ENCODE measurements at regions of chr9 and their contacts with region 1.

Region 1: DNA sequence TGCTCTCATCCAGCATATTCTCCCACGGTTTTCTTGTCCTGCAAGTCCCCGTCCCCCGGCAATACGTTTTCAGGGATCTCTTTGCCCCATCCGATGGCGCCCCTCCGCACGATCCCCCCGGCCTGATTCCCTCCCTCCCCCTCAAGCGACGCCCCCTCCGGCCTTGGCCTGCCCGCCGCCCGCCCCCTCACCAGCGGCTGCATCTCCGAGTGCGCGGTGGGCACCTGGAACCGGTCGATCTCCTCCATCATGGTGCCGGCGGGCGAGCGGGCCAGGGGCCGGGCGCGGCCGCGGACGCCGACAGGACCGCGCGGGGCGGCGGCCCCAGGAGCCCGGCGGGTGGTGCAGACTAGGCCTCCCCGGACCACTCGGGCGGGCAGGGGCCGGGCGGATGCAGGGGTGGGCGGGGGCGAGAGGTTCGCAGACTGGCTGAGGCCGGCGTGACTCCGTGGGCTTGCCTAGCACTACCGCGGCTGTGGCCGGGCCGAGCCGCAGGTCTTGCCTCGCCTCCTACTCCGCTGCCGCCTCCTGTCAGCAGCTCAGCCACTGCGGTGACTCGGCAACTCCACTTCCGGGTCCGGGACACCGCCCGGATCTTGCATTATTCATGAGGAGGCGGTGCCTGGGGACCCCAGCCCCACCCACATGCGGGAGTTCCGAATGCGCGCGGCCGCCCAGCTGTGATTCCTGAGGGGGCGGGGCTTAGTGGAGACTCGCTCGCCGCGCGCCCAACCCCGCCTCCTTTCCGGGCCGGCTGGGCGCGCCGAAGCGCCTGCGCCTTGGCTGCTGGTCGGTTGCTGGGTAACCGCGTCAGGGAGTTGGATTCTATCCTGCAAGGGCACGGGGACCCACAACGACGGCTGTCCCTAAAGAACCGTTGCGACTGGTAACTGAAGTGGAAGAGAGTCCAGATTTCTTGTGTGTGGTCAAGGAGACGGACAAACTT is at the starts of genes DNAI1 and FAM219A:
- DNase-seq: peak; percentile 99
- ATAC-seq: peak; percentile 96
- H3K4me3 ChIP-seq: peak within 1 kb of the TSS; percentile 32 to 76 (median 58)
- H3K4me3 Mint-ChIP-seq: peak within 1 kb of the TSS; percentile 96
- H3K27ac ChIP-seq: no peak within 1 kb of the TSS
- H3K27ac Mint-ChIP-seq: peak within 1 kb of the TSS; percentile 86
- H3K4me1 ChIP-seq: peaks cover 14 to 24% of the 10 kb centered on the region in 2 donors
- H3K4me1 Mint-ChIP-seq: peaks cover 35% of the 10 kb centered on the region
- H3K27me3 ChIP-seq: peaks cover 0 to 9% (median 4%) of the 10 kb centered on the region in 4 experiments
- H3K27me3 Mint-ChIP-seq: peaks cover 14% of the 10 kb centered on the region
- CTCF ChIP-seq: no peak
- total RNA-seq, gene DNAI1: not detected in 2 replicates
- total RNA-seq, gene FAM219A: 16.0 and 17.3 TPM in 2 replicates

Region 2: GRCh38 chr9:34185778-34186551 is 272.3 kb before region 1 on chr9:
- CTCF ChIA-PET with region 1: no interaction called
- POLR2A ChIA-PET with region 1: no interaction called
- intact Hi-C with region 1: loop called (anchors 10 kb)
- DNase-seq: peak; percentile 33
- ATAC-seq: peak; percentile 49
- H3K4me3 ChIP-seq: no peak overlapping the region
- H3K4me3 Mint-ChIP-seq: no peak overlapping the region
- H3K27ac ChIP-seq: no peak overlapping the region
- H3K27ac Mint-ChIP-seq: no peak overlapping the region
- H3K4me1 ChIP-seq: peaks cover 12 to 18% of the 10 kb centered on the region in 2 donors
- H3K4me1 Mint-ChIP-seq: peaks cover 34% of the 10 kb centered on the region
- H3K27me3 ChIP-seq: no peaks in the 10 kb centered on the region
- H3K27me3 Mint-ChIP-seq: no peaks in the 10 kb centered on the region
- CTCF ChIP-seq: no peak

Region 3: GRCh38 chr9:34500623-34501267 is 42.5 kb after region 1 on chr9:
- CTCF ChIA-PET with region 1: interaction called, 4 read pairs
- POLR2A ChIA-PET with region 1: no interaction called
- intact Hi-C with region 1: loop called (anchors 5 kb)
- DNase-seq: peak; percentile 78
- ATAC-seq: peak; percentile 86
- H3K4me3 ChIP-seq: no peak overlapping the region
- H3K4me3 Mint-ChIP-seq: no peak overlapping the region
- H3K27ac ChIP-seq: no peak overlapping the region
- H3K27ac Mint-ChIP-seq: no peak overlapping the region
- H3K4me1 ChIP-seq: peaks cover 0 to 3% of the 10 kb centered on the region in 2 donors
- H3K4me1 Mint-ChIP-seq: no peaks in the 10 kb centered on the region
- H3K27me3 ChIP-seq: peaks cover 0 to 10% (median 3%) of the 10 kb centered on the region in 4 experiments
- H3K27me3 Mint-ChIP-seq: peaks cover 38% of the 10 kb centered on the region
- CTCF ChIP-seq: peak; percentile 98

Region 4: GRCh38 chr9:34522971-34523797 is 64.9 kb after region 1 on chr9 and contains the start of gene ENHO:
- CTCF ChIA-PET with region 1: interaction called, 3 read pairs
- POLR2A ChIA-PET with region 1: no interaction called
- intact Hi-C with region 1: loop called (anchors 1 kb)
- DNase-seq: peak; percentile 95
- ATAC-seq: peak; percentile 98
- H3K4me3 ChIP-seq: peak within 1 kb of the TSS in 4 of 5 experiments; percentile 37 to 69 (median 50)
- H3K4me3 Mint-ChIP-seq: peak within 1 kb of the TSS; percentile 89
- H3K27ac ChIP-seq: no peak within 1 kb of the TSS
- H3K27ac Mint-ChIP-seq: peak within 1 kb of the TSS; percentile 76
- H3K4me1 ChIP-seq: peaks cover 9 to 12% of the 10 kb centered on the region in 2 donors
- H3K4me1 Mint-ChIP-seq: peaks cover 13% of the 10 kb centered on the region
- H3K27me3 ChIP-seq: peaks cover 0 to 18% (median 4%) of the 10 kb centered on the region in 4 experiments
- H3K27me3 Mint-ChIP-seq: peaks cover 28% of the 10 kb centered on the region
- CTCF ChIP-seq: no peak
- total RNA-seq, gene ENHO: not detected in 2 replicates

Region 5: DNA sequence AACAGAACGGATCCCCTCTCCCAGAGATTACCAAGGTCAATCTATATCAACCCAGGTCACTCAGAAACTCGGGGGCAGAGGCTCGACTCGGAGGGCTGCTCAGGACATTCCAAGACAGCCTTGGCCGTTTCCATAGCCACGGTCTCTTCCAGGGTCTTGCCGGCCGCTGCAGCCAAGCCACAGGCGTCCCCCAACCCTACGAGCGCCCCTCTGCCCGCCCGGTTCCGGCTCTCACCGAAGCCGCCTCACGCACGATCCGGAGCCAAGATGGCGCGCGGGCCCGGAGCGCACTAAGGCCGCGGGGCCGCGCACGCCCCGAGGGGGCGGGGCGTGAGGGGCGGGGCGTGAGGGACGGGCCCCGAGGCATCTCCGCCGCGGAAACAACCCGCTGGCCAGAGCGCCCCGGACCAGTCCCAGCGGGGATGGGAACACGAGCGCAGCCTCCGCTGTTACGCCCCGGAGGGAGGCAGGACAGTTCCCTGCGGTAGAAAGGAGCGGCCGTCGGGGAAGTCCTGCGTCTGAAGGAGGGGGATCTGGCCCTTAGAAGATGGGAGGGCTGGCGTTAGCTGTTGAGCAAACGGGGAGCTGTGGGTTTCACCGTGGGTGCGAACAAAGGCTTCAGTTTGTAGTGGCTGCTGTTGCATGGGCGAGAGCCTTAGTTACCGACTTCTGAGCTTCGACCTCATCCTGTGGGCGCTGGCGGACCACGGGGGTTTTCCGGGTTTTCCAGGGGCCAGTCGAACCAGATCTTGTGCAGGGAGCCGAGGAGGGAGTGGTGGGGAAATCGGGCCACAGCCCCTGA is 153.7 kb after region 1 on chr9 and contains the start of gene RPP25L:
- CTCF ChIA-PET with region 1: no interaction called
- POLR2A ChIA-PET with region 1: no interaction called
- intact Hi-C with region 1: loop called (anchors 1 kb)
- DNase-seq: peak; percentile 91
- ATAC-seq: peak; percentile 95
- H3K4me3 ChIP-seq: peak within 1 kb of the TSS; percentile 69 to 97 (median 80)
- H3K4me3 Mint-ChIP-seq: peak within 1 kb of the TSS; percentile 91
- H3K27ac ChIP-seq: peak within 1 kb of the TSS; percentile 78 to 87
- H3K27ac Mint-ChIP-seq: peak within 1 kb of the TSS; percentile 90
- H3K4me1 ChIP-seq: peaks cover 7 to 21% of the 10 kb centered on the region in 2 donors
- H3K4me1 Mint-ChIP-seq: peaks cover 22% of the 10 kb centered on the region
- H3K27me3 ChIP-seq: no peaks in the 10 kb centered on the region
- H3K27me3 Mint-ChIP-seq: no peaks in the 10 kb centered on the region
- CTCF ChIP-seq: no peak
- total RNA-seq, gene RPP25L: 20.2 and 21.7 TPM in 2 replicates

Region 6: DNA sequence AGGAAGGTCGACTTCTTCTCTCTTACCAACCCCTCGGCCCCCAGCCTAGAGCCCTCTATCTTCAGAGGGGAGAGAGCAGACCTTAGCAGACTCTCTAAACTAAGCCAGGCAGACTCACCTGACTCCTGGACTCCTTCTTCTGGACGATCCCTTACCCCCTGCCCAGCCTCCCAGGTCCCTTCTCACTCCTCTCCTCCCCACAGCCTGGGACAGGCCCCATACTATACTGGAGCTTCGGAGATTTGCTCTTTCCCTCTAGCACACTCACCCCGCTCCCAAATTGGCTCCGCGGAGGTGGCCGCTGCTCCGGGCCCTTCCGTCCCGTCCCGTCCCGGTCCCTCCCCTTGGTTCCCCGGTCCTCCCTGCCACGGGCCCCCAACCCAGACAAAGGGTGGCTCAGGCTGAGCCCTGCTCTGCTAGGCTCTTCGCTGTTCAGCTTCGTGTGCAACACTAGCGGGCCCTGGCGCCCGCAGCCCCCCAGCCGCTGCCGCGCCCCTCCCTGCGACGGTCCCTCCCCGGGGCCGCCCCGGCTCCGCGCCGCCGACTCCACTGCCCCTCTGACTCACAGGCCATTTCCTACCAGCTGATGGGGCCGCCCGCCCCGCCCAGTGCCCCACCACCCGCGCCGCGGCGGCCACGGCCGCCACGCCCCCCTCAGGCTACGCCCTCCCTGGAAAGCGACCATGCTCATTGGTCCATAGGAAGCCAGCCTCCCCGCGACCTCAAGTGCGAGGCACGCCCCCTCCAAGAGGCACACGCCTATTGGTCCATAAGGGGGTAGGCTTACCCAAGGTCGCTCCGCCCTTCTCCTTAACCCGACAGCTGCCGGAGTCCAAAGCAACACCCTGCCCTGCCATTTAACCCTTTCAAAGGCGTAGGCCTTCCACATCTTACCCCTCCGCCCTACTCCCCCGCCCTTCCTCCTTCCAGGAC is 653.0 kb after region 1 on chr9:
- CTCF ChIA-PET with region 1: no interaction called
- POLR2A ChIA-PET with region 1: no interaction called
- intact Hi-C with region 1: loop called (anchors 5 kb)
- DNase-seq: peak; percentile 96
- ATAC-seq: peak; percentile 77
- H3K4me3 ChIP-seq: peak overlapping the region; percentile 32 to 74 (median 59)
- H3K4me3 Mint-ChIP-seq: peak overlapping the region; percentile 88
- H3K27ac ChIP-seq: peak overlapping the region; percentile 80 to 83
- H3K27ac Mint-ChIP-seq: peak overlapping the region; percentile 93
- H3K4me1 ChIP-seq: peaks cover 33 to 45% of the 10 kb centered on the region in 2 donors
- H3K4me1 Mint-ChIP-seq: peaks cover 58% of the 10 kb centered on the region
- H3K27me3 ChIP-seq: no peaks in the 10 kb centered on the region
- H3K27me3 Mint-ChIP-seq: no peaks in the 10 kb centered on the region
- CTCF ChIP-seq: no peak